Ascending aorta (tissue), 2 donors: ENCODE measurements at regions of chr10 and their contacts with region 1.

Region 1: GRCh38 chr10:70758757-70759514 is 26.2 kb downstream of the TBATA start:
- DNase-seq: peak in 1 of 2 donors; percentile 75
- H3K4me3 ChIP-seq: no peak overlapping the region
- H3K27ac ChIP-seq: no peak overlapping the region
- H3K4me1 ChIP-seq: no peaks in the 10 kb centered on the region
- H3K27me3 ChIP-seq: no peaks in the 10 kb centered on the region
- CTCF ChIP-seq: peak; percentile 44 to 72 (median 64)

Region 2: GRCh38 chr10:70549962-70550458 is 208.9 kb before region 1 on chr10:
- intact Hi-C with region 1: loop called (anchors 2 kb)
- DNase-seq: peak in 1 of 2 donors; percentile 82
- H3K4me3 ChIP-seq: no peak overlapping the region
- H3K27ac ChIP-seq: no peak overlapping the region
- H3K4me1 ChIP-seq: no peaks in the 10 kb centered on the region
- H3K27me3 ChIP-seq: no peaks in the 10 kb centered on the region
- CTCF ChIP-seq: peak; percentile 79 to 90 (median 80)

Region 3: DNA sequence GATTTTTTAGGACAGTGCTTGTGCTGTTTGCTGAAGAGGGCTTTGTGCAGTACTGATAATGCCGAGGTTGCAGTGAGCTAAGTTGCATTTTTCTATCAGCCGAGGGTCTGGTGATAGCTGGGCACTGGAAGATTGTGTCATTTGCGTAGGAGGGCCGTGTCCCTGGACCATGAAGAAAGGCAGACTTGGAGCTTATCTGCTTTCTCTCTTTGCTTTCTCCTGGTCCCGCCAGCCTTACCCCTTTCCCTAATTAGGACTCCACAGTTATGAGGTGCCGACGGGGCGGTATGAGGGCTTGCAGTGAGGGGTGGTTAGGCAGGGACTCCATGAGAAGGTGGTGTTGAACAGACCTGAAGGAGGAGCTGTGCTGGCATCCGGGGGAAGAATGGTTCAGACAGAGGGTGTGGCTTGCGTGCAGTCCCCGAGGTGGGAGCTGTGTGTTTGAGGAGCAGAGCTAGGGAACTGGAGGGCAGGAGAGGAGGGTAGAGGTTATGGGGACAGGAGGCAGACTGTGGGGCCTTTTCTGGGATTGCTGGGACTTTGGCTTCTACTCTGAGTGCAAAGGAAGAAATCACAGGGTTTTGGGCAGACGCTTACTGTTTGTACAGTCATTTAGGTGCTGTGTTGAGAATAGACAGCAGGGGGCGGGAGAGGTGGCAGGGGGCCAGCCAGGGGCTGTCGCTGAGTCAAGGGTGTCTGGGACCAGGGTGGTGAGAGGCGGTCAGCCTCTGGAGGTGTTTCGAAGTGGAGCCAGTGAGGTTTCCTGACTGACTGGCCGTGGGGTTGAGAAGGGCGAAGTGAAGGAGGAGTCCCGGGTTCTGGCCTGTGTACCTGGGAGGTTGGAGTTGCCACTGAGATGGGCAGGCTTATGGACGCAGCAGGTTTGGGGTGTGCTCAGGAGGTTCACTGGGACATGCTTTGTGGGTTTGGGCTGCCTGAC is 199.8 kb before region 1 on chr10:
- intact Hi-C with region 1: loop called (anchors 2 kb)
- DNase-seq: peak in 1 of 2 donors; percentile 74
- H3K4me3 ChIP-seq: peak overlapping the region in 1 of 2 donors; percentile 26
- H3K27ac ChIP-seq: no peak overlapping the region
- H3K4me1 ChIP-seq: no peaks in the 10 kb centered on the region
- H3K27me3 ChIP-seq: no peaks in the 10 kb centered on the region
- CTCF ChIP-seq: peak; percentile 34 to 50 (median 50)